Sciatic nerve (tissue), 2 donors: ENCODE measurements at regions of chr1 and their contacts with region 1.

Region 1: GRCh38 chr1:5481889-5482288 is 510.3 kb downstream of the NPHP4 start:
- DNase-seq: no peak
- ATAC-seq: no peak

Region 2: GRCh38 chr1:5522531-5523145 is 40.7 kb after region 1 on chr1:
- intact Hi-C with region 1: loop called (anchors 1 kb)
- DNase-seq: no peak
- ATAC-seq: no peak